Endothelial cell of umbilical vein (primary cell): ENCODE measurements at regions of chr1 and their contacts with region 1.

Region 1: GRCh38 chr1:205680073-205680851 is at the start of gene SLC45A3:
- DNase-seq: no peak
- H3K4me3 ChIP-seq: peak within 1 kb of the TSS; percentile 66 to 82 (median 72)
- H3K27ac ChIP-seq: peak within 1 kb of the TSS; percentile 95
- H3K4me1 ChIP-seq: peaks cover 19% of the 10 kb centered on the region
- H3K27me3 ChIP-seq: no peaks in the 10 kb centered on the region
- CTCF ChIP-seq: no peak
- POLR2A ChIP-seq: no peak
- total RNA-seq, gene SLC45A3: 15.6 and 16.9 TPM in 2 replicates

Region 2: DNA sequence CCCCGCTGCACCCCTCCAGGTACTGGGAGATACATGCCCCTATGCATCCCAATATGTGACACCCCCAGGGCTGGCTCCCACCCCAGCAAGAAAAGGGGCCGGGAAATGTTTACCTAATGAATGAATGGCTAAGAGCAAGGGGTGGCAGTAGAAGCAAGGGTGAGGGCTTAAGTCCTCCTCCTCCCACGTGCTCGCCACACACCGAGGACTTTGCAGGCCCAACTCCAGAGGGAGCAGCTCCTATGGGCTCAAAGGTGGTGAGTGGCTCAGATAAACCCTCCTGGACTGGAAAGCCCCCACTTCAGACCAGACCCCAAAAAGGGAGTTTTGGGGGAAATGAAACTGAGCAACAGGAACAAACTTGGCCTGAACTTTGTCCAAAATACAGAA is 11.3 kb before region 1 on chr1:
- CTCF ChIA-PET with region 1: interaction called, 18 read pairs
- POLR2A ChIA-PET with region 1: interaction called, 4 read pairs
- dilution Hi-C with region 1: no loop called
- intact Hi-C with region 1: loop called (anchors 1 kb)
- DNase-seq: no peak
- H3K4me3 ChIP-seq: no peak overlapping the region
- H3K27ac ChIP-seq: no peak overlapping the region
- H3K4me1 ChIP-seq: peaks cover 35% of the 10 kb centered on the region
- H3K27me3 ChIP-seq: no peaks in the 10 kb centered on the region
- CTCF ChIP-seq: no peak
- POLR2A ChIP-seq: no peak

Region 3: DNA sequence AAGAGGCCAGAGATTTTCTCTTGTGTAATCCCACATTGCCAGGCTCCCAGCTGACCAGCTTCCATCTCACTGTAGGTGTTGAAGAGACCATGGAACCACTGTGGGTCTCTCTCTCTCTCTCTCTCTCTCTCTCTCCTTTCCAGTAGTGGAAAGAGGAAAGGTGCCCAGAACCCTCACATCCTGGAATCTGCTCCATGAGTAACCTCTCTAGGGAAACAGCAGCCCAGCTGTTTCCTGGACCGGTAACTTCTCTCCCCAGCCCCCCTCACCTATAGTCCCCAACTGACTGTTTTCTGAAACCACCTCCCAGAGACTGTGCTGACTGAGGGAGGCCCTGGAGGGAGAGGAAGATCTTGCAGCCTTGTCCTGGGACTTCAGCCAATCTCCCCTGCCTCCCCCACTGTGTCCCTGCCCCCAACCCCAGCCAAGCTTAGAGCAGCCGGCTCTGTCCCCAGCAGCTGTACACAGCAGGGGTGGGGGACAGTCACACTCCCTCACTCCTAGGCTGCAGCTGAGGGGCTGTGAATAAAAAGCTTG is 20.7 kb after region 1 on chr1:
- CTCF ChIA-PET with region 1: interaction called, 5 read pairs
- POLR2A ChIA-PET with region 1: interaction called, 4 read pairs
- dilution Hi-C with region 1: no loop called
- intact Hi-C with region 1: loop called (anchors 1 kb)
- DNase-seq: peak; percentile 90
- H3K4me3 ChIP-seq: no peak overlapping the region
- H3K27ac ChIP-seq: peak overlapping the region; percentile 20
- H3K4me1 ChIP-seq: peaks cover 16% of the 10 kb centered on the region
- H3K27me3 ChIP-seq: no peaks in the 10 kb centered on the region
- CTCF ChIP-seq: no peak
- POLR2A ChIP-seq: no peak

Region 4: DNA sequence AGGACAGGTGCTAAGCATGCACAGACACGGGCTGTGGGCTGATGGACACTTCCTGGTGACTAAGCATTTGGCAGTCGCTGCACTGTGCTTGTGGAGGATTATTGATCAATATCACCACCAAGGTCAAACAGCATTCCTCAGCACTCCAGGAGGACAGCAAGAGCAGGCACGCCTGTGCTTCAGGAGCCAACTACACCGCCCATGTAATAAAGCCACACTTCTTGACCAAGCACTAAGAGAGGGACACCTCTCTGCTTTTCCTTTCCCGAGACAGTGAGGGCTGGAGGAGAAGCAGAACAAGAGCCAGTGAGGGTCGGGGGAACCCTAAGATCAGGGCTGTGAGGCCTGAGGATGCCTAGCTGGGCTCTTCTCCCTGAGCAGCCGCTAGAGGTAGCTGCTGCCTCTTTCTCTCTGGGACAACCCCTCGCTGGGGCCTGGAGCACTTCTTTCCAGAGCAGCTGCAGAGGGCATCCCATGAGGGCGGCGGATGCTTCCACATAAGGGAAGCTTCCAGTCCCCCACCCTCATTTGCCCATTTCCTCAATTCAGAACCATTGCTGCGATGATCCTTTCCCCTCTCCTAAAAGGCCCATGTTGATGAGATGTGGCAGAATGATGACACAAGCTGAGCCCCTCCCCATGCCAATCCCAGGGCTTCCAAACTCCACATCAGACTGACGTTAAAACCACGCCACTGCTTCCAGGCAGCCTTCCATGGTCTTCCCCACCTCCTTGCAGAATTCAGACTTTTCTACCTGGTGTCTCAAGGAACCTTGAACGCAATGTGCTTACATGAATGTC is 303.9 kb after region 1 on chr1:
- CTCF ChIA-PET with region 1: no interaction called
- POLR2A ChIA-PET with region 1: no interaction called
- dilution Hi-C with region 1: no loop called
- intact Hi-C with region 1: no loop called
- DNase-seq: peak; percentile 57
- H3K4me3 ChIP-seq: no peak overlapping the region
- H3K27ac ChIP-seq: no peak overlapping the region
- H3K4me1 ChIP-seq: peaks cover 30% of the 10 kb centered on the region
- H3K27me3 ChIP-seq: no peaks in the 10 kb centered on the region
- CTCF ChIP-seq: peak; percentile 84 to 96
- POLR2A ChIP-seq: no peak